Caco-2 (cell line): ENCODE measurements at regions of chr17 and their contacts with region 1.

Region 1: DNA sequence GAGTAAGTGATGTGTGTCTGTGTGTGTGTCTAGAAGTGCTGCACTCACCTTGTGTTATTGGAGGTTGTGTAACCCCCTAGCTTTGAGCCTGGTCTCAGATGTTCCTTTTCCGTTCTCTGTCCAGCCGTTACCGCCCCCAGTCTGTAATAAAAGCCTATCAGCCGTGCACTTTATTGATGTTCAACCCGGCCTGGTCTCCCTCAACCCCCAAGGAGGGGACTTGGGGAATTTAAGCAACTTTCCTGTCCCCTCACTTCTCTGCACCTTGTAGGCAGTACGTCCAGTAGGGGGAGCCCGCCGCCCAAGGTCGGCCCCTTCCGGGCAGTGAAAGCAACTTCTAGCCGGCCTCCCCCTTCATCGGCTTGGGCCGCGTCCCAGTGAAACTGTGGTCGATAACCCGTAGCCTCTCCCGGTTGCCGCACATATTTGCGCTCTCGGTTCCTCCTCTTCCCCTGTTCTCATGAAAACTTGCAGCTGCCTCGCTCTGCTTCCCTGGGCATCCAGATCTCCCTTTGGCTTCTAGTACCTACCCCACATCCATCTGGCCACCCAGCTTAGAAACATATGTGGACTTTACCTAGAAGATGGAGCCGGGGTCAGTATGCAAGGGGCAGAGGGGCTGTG is 7.9 kb downstream of the PNPO start:
- DNase-seq: peak; percentile 96 to 99
- H3K4me3 ChIP-seq: peak overlapping the region; percentile 1; the same call in 1 of the 2 replicates
- H3K4me3 Mint-ChIP-seq: peak overlapping the region; percentile 55
- H3K27ac Mint-ChIP-seq: peak overlapping the region; percentile 58
- H3K4me1 ChIP-seq: peaks cover 14% of the 10 kb centered on the region
- H3K4me1 Mint-ChIP-seq: peaks cover 28% of the 10 kb centered on the region
- H3K27me3 ChIP-seq: no peaks in the 10 kb centered on the region
- H3K27me3 Mint-ChIP-seq: no peaks in the 10 kb centered on the region
- CTCF ChIP-seq: peak; percentile 100

Region 2: DNA sequence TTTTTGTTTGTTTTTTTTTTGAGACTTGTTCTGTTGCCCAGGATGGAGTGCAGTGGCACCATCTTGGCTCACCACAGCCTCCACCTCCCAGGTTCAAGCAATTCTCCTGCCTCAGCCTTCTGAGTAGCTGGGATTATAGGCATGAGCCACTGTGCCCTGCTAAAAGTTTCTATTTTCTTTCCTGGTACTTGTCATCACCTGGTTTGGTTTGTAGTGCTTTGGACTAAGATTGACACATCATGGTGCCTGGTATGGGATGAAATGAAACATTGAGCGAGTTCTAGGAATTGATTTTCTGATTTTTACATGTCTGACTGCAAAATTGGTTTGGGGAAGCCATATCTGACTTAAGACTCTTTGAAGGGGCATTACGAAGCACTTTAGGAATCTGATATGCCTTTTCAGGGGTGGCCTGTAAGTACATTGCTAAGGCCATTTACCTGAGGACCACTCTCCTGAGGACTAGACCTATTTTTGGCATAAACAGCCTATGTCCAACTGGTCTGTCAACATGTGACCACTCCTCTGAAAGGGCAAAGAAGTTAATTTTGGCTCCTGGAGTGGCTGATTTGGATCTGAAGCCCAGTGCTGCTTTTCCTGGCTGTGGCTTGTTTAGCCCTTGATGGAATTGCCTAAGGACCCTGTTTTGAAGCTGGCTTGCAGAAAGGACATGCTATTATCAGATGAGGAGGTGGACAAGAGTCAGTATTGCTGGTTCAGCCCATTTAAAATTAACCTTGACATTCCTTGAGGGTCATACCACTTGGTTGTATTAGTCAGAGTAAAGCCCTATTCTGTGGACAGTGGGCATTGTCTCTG is 273.7 kb before region 1 on chr17:
- CTCF ChIA-PET with region 1: no interaction called
- POLR2A ChIA-PET with region 1: no interaction called
- intact Hi-C with region 1: no loop called
- DNase-seq: no peak
- H3K4me3 ChIP-seq: no peak overlapping the region
- H3K4me3 Mint-ChIP-seq: no peak overlapping the region
- H3K27ac Mint-ChIP-seq: no peak overlapping the region
- H3K4me1 ChIP-seq: no peaks in the 10 kb centered on the region; the same call in 1 of the 2 replicates
- H3K4me1 Mint-ChIP-seq: no peaks in the 10 kb centered on the region
- H3K27me3 ChIP-seq: no peaks in the 10 kb centered on the region
- H3K27me3 Mint-ChIP-seq: no peaks in the 10 kb centered on the region
- CTCF ChIP-seq: no peak

Region 3: DNA sequence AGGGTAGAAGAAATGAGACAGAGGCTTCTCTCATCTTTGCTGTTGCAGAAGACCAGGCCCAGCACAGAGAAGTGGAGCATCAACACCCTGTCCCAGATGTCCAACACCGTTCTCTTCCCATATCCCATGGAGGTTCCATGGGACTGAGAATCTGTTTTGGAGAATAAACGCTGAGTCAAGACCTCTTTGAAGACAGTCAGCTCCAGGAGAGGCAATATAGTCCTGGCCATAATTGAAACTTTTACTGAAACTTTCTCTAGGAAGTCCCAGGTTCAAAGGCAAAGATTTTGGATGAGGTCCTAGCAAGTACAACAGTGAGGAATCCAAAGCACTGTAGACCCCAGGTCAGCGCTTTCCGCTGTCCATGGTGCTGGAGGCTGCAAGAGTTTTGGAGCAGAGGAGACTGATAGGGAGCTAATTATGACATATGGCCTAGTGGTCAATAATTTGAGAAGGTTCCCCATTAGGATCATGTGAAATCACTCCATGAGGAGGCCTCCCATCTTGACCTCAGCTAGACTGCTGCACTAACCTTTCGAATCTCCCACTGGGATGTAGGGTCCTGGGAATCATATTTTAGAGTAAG is 163.6 kb before region 1 on chr17:
- CTCF ChIA-PET with region 1: no interaction called
- POLR2A ChIA-PET with region 1: no interaction called
- intact Hi-C with region 1: no loop called
- DNase-seq: peak; percentile 78 to 89
- H3K4me3 ChIP-seq: no peak overlapping the region
- H3K4me3 Mint-ChIP-seq: no peak overlapping the region
- H3K27ac Mint-ChIP-seq: no peak overlapping the region
- H3K4me1 ChIP-seq: peaks cover 9% of the 10 kb centered on the region; the same call in 1 of the 2 replicates
- H3K4me1 Mint-ChIP-seq: peaks cover 13% of the 10 kb centered on the region
- H3K27me3 ChIP-seq: peaks cover 1% of the 10 kb centered on the region; the same call in 1 of the 2 replicates
- H3K27me3 Mint-ChIP-seq: peaks cover 38% of the 10 kb centered on the region
- CTCF ChIP-seq: no peak

Region 4: GRCh38 chr17:47850692-47851573 is 98.3 kb before region 1 on chr17 and contains the start of gene SP6:
- CTCF ChIA-PET with region 1: interaction called, 12 read pairs
- POLR2A ChIA-PET with region 1: no interaction called
- intact Hi-C with region 1: no loop called
- DNase-seq: peak; percentile 98 to 99
- H3K4me3 ChIP-seq: peak within 1 kb of the TSS; percentile 56
- H3K4me3 Mint-ChIP-seq: peak within 1 kb of the TSS; percentile 90
- H3K27ac Mint-ChIP-seq: peak within 1 kb of the TSS; percentile 77
- H3K4me1 ChIP-seq: peaks cover 12% of the 10 kb centered on the region
- H3K4me1 Mint-ChIP-seq: peaks cover 23% of the 10 kb centered on the region
- H3K27me3 ChIP-seq: no peaks in the 10 kb centered on the region
- H3K27me3 Mint-ChIP-seq: peaks cover 12% of the 10 kb centered on the region
- CTCF ChIP-seq: peak; percentile 31 to 57
- total RNA-seq, gene SP6: 20.6 and 25.0 TPM in 2 replicates

Region 5: DNA sequence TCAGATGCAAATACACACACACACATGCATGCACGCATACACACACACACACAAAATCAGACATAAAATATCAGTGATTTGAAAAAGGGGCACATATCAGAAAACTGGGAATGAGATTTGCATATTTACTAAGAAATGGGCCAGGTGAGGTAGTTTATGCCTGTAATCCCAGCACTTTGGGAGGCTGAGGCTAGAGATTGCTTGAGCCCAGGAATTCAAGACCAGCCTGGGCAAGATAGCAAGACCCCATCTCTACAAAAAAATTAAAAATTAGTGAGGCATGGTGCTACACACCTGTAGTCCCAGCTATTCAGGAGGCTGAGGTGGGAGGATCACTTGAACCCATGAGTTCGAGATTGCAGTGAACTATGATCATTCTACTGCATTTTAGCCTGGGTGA is 30.3 kb before region 1 on chr17:
- CTCF ChIA-PET with region 1: no interaction called
- POLR2A ChIA-PET with region 1: no interaction called
- intact Hi-C with region 1: no loop called
- DNase-seq: no peak
- H3K4me3 ChIP-seq: no peak overlapping the region
- H3K4me3 Mint-ChIP-seq: no peak overlapping the region
- H3K27ac Mint-ChIP-seq: no peak overlapping the region
- H3K4me1 ChIP-seq: no peaks in the 10 kb centered on the region
- H3K4me1 Mint-ChIP-seq: no peaks in the 10 kb centered on the region
- H3K27me3 ChIP-seq: no peaks in the 10 kb centered on the region
- H3K27me3 Mint-ChIP-seq: no peaks in the 10 kb centered on the region
- CTCF ChIP-seq: no peak

Region 6: DNA sequence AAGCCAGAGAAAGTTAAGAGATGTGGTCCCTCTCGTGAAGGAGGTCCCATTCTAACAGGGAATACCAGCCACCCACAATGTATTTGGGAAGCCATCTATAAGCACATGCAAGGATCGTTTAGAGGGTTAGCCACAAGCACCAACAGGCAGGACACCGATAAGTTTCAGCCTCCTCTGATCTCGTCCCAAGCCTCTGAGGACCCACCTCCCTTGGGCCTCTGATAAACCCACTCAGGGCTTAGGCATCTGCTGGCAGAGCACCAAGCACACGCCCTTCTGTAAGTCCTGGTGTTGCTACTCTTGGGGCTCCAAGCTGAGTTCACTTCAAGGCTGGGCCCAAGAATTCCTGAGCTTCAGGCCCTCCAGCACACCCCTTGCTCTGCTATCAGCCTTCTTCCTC is 13.3 kb before region 1 on chr17:
- CTCF ChIA-PET with region 1: interaction called, 32 read pairs
- POLR2A ChIA-PET with region 1: interaction called, 10 read pairs
- intact Hi-C with region 1: loop called (anchors 1 kb)
- DNase-seq: no peak
- H3K4me3 ChIP-seq: no peak overlapping the region
- H3K4me3 Mint-ChIP-seq: no peak overlapping the region
- H3K27ac Mint-ChIP-seq: no peak overlapping the region
- H3K4me1 ChIP-seq: 0 out of 2 replicates have a peak, but pooled peaks cover 6% of the 10 kb centered on the region
- H3K4me1 Mint-ChIP-seq: peaks cover 5% of the 10 kb centered on the region
- H3K27me3 ChIP-seq: no peaks in the 10 kb centered on the region
- H3K27me3 Mint-ChIP-seq: no peaks in the 10 kb centered on the region
- CTCF ChIP-seq: no peak

Region 7: GRCh38 chr17:47978324-47978723 is 29.1 kb after region 1 on chr17:
- CTCF ChIA-PET with region 1: interaction called, 219 read pairs
- POLR2A ChIA-PET with region 1: no interaction called
- intact Hi-C with region 1: loop called (anchors 5 kb)
- DNase-seq: peak; percentile 80 to 85
- H3K4me3 ChIP-seq: no peak overlapping the region
- H3K4me3 Mint-ChIP-seq: no peak overlapping the region
- H3K27ac Mint-ChIP-seq: no peak overlapping the region
- H3K4me1 ChIP-seq: no peaks in the 10 kb centered on the region
- H3K4me1 Mint-ChIP-seq: no peaks in the 10 kb centered on the region
- H3K27me3 ChIP-seq: no peaks in the 10 kb centered on the region
- H3K27me3 Mint-ChIP-seq: no peaks in the 10 kb centered on the region
- CTCF ChIP-seq: peak; percentile 97 to 98